K562 (cell line): ENCODE measurements at regions of chr2 and their contacts with region 1.

Region 1: DNA sequence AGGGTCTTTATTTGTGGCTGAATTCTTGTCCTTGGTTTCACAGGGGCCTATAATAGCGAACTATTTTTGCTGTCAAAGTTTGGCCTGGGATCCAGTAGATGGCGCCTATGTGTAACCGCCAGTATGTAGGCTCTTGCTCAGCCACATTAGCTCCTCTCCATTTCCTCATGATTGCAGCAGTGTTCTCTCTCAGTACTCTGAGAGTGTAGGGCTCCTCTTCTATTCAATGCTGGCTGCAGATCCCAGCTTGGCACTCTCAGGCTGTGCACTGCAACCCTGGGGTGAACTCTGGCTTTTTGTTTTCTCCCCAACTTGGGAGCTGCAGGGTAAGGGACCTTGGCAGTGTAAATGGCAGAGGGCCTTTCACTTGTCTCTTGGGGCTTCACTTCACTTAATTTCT is 344.6 kb upstream of the CHAC2 start:
- DNase-seq: peak in 3 of 4 experiments; percentile 12 to 26 (median 12)
- ATAC-seq: peak; percentile 76
- H3K4me3 ChIP-seq: no peak overlapping the region
- H3K27ac ChIP-seq: no peak overlapping the region
- H3K4me1 ChIP-seq: no peaks in the 10 kb centered on the region
- H3K27me3 ChIP-seq: no peaks in the 10 kb centered on the region
- CTCF ChIP-seq: peak; percentile 28 to 40 (median 29); a peak in 4 of 6 replicates
- EP300 ChIP-seq: no peak
- POLR2A ChIP-seq: no peak
- RAD21 ChIP-seq: peak in 1 of 2 experiments; percentile 55; a peak in 3 of 4 replicates

Region 2: DNA sequence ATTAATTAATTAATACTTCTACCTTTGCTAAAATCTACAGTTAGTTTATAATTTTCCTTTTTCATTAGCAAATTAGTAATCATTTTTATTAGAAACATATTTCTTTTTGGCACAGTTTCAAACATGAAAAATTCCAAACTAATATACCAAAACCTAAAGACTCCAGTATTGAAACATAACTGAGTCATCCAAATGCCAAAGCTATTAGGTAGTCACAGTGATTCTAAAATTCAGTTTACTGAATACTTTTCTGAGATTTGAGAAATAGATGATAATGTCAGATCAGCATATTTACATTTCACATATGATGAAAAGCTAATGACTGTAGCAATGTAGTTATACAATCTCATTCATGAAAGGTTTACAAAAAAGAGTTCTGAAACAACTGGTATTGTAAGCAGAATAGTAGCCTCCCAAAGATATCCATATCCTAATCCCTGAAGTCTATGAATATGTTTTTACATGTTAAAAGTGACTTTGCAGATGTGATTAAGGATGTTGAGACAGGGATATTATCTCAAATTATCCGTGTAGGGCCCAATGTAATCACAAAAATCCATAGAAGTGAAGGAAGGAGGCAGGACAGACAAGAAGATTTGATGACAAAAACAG is 335.6 kb before region 1 on chr2:
- CTCF ChIA-PET with region 1: no interaction called
- POLR2A ChIA-PET with region 1: no interaction called
- in situ Hi-C with region 1: no loop called
- intact Hi-C with region 1: no loop called
- DNase-seq: no peak
- ATAC-seq: no peak
- H3K4me3 ChIP-seq: no peak overlapping the region
- H3K27ac ChIP-seq: no peak overlapping the region
- H3K4me1 ChIP-seq: no peaks in the 10 kb centered on the region
- H3K27me3 ChIP-seq: no peaks in the 10 kb centered on the region
- CTCF ChIP-seq: no peak
- EP300 ChIP-seq: no peak
- POLR2A ChIP-seq: no peak
- RAD21 ChIP-seq: no peak

Region 3: GRCh38 chr2:53739032-53739431 is 316.1 kb after region 1 on chr2:
- CTCF ChIA-PET with region 1: no interaction called
- POLR2A ChIA-PET with region 1: no interaction called
- in situ Hi-C with region 1: no loop called
- intact Hi-C with region 1: loop called (anchors 10 kb)
- DNase-seq: no peak
- ATAC-seq: no peak
- H3K4me3 ChIP-seq: no peak overlapping the region
- H3K27ac ChIP-seq: no peak overlapping the region
- H3K4me1 ChIP-seq: no peaks in the 10 kb centered on the region
- H3K27me3 ChIP-seq: no peaks in the 10 kb centered on the region
- CTCF ChIP-seq: no peak
- EP300 ChIP-seq: no peak
- POLR2A ChIP-seq: no peak
- RAD21 ChIP-seq: no peak

Region 4: DNA sequence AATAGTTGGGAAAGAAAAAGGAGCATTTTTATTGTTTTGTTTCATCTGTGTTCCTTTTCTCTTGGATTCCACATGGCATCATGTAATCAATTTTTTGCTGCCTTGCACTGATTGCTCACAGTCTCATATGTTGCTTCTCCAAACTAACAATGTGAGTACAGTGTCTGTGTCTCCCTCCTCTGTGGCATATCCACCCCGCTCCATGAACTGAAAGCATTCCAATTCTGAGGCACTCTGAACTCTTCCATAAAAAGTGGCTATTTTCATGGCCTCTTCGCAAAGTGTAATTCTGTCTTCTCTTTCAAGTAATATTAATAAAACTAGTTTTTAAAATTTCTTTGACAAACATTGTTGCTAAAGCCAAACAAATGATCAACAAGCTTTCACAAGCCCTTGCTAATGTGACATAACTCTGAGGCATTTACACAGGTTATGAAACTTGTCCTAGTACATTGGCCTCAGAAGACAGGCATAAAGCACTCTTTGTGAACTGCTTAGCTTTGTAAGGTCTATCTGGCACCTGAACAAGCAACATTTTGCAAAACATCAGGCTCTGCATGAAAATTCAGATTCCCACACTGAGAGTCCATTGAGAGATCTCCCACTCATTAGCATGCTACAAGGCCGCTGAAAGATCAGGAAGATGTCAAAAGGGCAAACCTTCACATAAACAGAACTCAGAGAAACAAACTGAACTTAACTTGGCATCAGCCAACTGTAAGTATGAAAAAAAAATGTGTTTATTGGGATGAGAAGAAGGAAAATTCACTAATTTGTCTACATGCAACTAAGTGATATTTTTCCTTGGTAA is 403.8 kb after region 1 on chr2:
- CTCF ChIA-PET with region 1: no interaction called
- POLR2A ChIA-PET with region 1: no interaction called
- in situ Hi-C with region 1: no loop called
- intact Hi-C with region 1: loop called (anchors 10 kb)
- DNase-seq: no peak
- ATAC-seq: no peak
- H3K4me3 ChIP-seq: no peak overlapping the region
- H3K27ac ChIP-seq: no peak overlapping the region
- H3K4me1 ChIP-seq: no peaks in the 10 kb centered on the region
- H3K27me3 ChIP-seq: no peaks in the 10 kb centered on the region
- CTCF ChIP-seq: no peak
- EP300 ChIP-seq: no peak
- POLR2A ChIP-seq: no peak
- RAD21 ChIP-seq: no peak